Motor neuron (in vitro differentiated cells): ENCODE measurements at regions of chr21 and their contacts with region 1.

Region 1: GRCh38 chr21:26865857-26866256 is 20.6 kb upstream of the ADAMTS1 start:
- ATAC-seq: no peak
- H3K4me3 ChIP-seq: no peak overlapping the region
- H3K27ac ChIP-seq: no peak overlapping the region
- H3K4me1 ChIP-seq: no peaks in the 10 kb centered on the region

Region 2: GRCh38 chr21:27564684-27565301 is 698.9 kb after region 1 on chr21:
- in situ Hi-C with region 1: loop called in 1 of 9 experiments (anchors 10 kb)
- ATAC-seq: peak; percentile 64 to 91 (median 77)
- H3K4me3 ChIP-seq: no peak overlapping the region
- H3K27ac ChIP-seq: no peak overlapping the region
- H3K4me1 ChIP-seq: peaks cover 10 to 13% of the 10 kb centered on the region in 2 donors